ENCODE measurements at regions of chr12 and their contacts with region 1.

Region 1: GRCh38 chr12:14995583-14996425 is 23.0 kb downstream of the PDE6H start:
- DNase-seq: peak in 2 of 35 experiments; percentile 28 to 83
- ATAC-seq: peak in 3 of 4 experiments; percentile 36 to 70 (median 37)
- H3K4me3 ChIP-seq: no peak overlapping the region
- H3K4me3 Mint-ChIP-seq: peak overlapping the region in 2 of 3 donors; percentile 28 to 46
- H3K27ac ChIP-seq: no peak overlapping the region
- H3K27ac Mint-ChIP-seq: peak overlapping the region; percentile 89 to 91
- H3K4me1 ChIP-seq: peaks cover 15 to 18% of the 10 kb centered on the region in 2 experiments
- H3K4me1 Mint-ChIP-seq: peaks cover 27 to 31% (median 31%) of the 10 kb centered on the region in 3 donors
- H3K27me3 ChIP-seq: no peaks in the 10 kb centered on the region
- H3K27me3 Mint-ChIP-seq: peaks cover 5 to 6% of the 10 kb centered on the region in 2 donors

Region 2: GRCh38 chr12:14845350-14845750 is 150.5 kb before region 1 on chr12:
- CTCF ChIA-PET with region 1: interaction called, 9 to 40 read pairs
- POLR2A ChIA-PET with region 1: interaction called in 1 of 2 experiments, 5 read pairs
- DNase-seq: peak in 30 of 35 experiments; percentile 1 to 75 (median 26)
- ATAC-seq: peak; percentile 57 to 75 (median 65)
- H3K4me3 ChIP-seq: no peak overlapping the region
- H3K4me3 Mint-ChIP-seq: no peak overlapping the region
- H3K27ac ChIP-seq: no peak overlapping the region
- H3K27ac Mint-ChIP-seq: no peak overlapping the region
- H3K4me1 ChIP-seq: peaks cover 3 to 5% of the 10 kb centered on the region in 2 experiments
- H3K4me1 Mint-ChIP-seq: peaks cover 5 to 14% (median 8%) of the 10 kb centered on the region in 3 donors
- H3K27me3 ChIP-seq: no peaks in the 10 kb centered on the region
- H3K27me3 Mint-ChIP-seq: no peaks in the 10 kb centered on the region

Region 3: GRCh38 chr12:14931359-14931758 is 64.4 kb before region 1 on chr12:
- CTCF ChIA-PET with region 1: interaction called, 10 to 23 read pairs
- POLR2A ChIA-PET with region 1: interaction called in 1 of 2 experiments, 4 read pairs
- DNase-seq: no peak
- ATAC-seq: no peak
- H3K4me3 ChIP-seq: no peak overlapping the region
- H3K4me3 Mint-ChIP-seq: no peak overlapping the region
- H3K27ac ChIP-seq: no peak overlapping the region
- H3K27ac Mint-ChIP-seq: peak overlapping the region in 1 of 2 donors; percentile 39
- H3K4me1 ChIP-seq: no peaks in the 10 kb centered on the region
- H3K4me1 Mint-ChIP-seq: peaks cover 7 to 21% (median 10%) of the 10 kb centered on the region in 3 donors
- H3K27me3 ChIP-seq: no peaks in the 10 kb centered on the region
- H3K27me3 Mint-ChIP-seq: no peaks in the 10 kb centered on the region

Region 4: GRCh38 chr12:14948672-14949071 is 47.1 kb before region 1 on chr12:
- CTCF ChIA-PET with region 1: interaction called in 1 of 2 experiments, 7 read pairs
- POLR2A ChIA-PET with region 1: interaction called in 1 of 2 experiments, 10 read pairs
- DNase-seq: peak in 28 of 35 experiments; percentile 42 to 87 (median 58)
- ATAC-seq: peak; percentile 82 to 90 (median 88)
- H3K4me3 ChIP-seq: peak overlapping the region; percentile 23 to 60
- H3K4me3 Mint-ChIP-seq: peak overlapping the region; percentile 73 to 97 (median 82)
- H3K27ac ChIP-seq: peak overlapping the region; percentile 97
- H3K27ac Mint-ChIP-seq: peak overlapping the region; percentile 96 to 99
- H3K4me1 ChIP-seq: peaks cover 57 to 76% of the 10 kb centered on the region in 2 experiments
- H3K4me1 Mint-ChIP-seq: peaks cover 93 to 94% (median 94%) of the 10 kb centered on the region in 3 donors
- H3K27me3 ChIP-seq: no peaks in the 10 kb centered on the region
- H3K27me3 Mint-ChIP-seq: no peaks in the 10 kb centered on the region

Region 5: DNA sequence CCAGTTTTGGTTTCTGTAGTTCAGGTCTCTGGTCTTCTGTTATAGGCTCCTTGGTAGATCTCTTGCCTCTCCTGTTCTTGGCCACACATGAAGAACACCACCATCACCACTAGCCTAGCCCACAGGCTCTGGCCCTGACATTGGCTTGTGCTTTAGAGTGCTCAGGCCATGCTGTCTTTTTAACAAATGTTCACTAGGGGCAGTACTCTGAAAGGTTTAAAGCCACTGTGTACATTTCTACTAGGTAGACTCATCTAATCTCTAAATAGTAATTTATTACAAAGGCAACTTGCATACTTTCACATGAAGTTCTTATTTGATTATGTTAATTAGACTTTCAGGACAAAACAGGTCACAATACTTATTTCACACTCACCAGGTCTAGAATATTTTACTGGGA is 15.4 kb after region 1 on chr12:
- CTCF ChIA-PET with region 1: no interaction called
- POLR2A ChIA-PET with region 1: no interaction called
- DNase-seq: no peak
- ATAC-seq: no peak
- H3K4me3 ChIP-seq: no peak overlapping the region
- H3K4me3 Mint-ChIP-seq: no peak overlapping the region
- H3K27ac ChIP-seq: no peak overlapping the region
- H3K27ac Mint-ChIP-seq: no peak overlapping the region
- H3K4me1 ChIP-seq: no peaks in the 10 kb centered on the region
- H3K4me1 Mint-ChIP-seq: no peaks in the 10 kb centered on the region
- H3K27me3 ChIP-seq: no peaks in the 10 kb centered on the region
- H3K27me3 Mint-ChIP-seq: peaks cover 10 to 22% of the 10 kb centered on the region in 2 donors

Region 6: GRCh38 chr12:15033641-15034040 is 37.8 kb after region 1 on chr12:
- CTCF ChIA-PET with region 1: no interaction called
- POLR2A ChIA-PET with region 1: no interaction called
- DNase-seq: no peak
- ATAC-seq: no peak
- H3K4me3 ChIP-seq: no peak overlapping the region
- H3K4me3 Mint-ChIP-seq: no peak overlapping the region
- H3K27ac ChIP-seq: no peak overlapping the region
- H3K27ac Mint-ChIP-seq: no peak overlapping the region
- H3K4me1 ChIP-seq: no peaks in the 10 kb centered on the region
- H3K4me1 Mint-ChIP-seq: no peaks in the 10 kb centered on the region
- H3K27me3 ChIP-seq: peaks cover 0 to 10% of the 10 kb centered on the region in 2 experiments
- H3K27me3 Mint-ChIP-seq: peaks cover 27 to 28% of the 10 kb centered on the region in 2 donors